Psoas muscle (tissue), 8 donors: ENCODE measurements at regions of chr3 and their contacts with region 1.

Region 1: GRCh38 chr3:194871143-194871863 is 185.6 kb downstream of the FAM43A start:
- DNase-seq: peak; percentile 64 to 85
- ATAC-seq: peak; percentile 82 to 92 (median 88)
- H3K4me3 ChIP-seq: no peak overlapping the region
- H3K27ac ChIP-seq: peak overlapping the region; percentile 31
- H3K4me1 ChIP-seq: peaks cover 23% of the 10 kb centered on the region
- H3K27me3 ChIP-seq: no peaks in the 10 kb centered on the region
- CTCF ChIP-seq: no peak

Region 2: GRCh38 chr3:194824701-194825111 is 46.6 kb before region 1 on chr3:
- intact Hi-C with region 1: loop called in 1 of 2 experiments (anchors 5 kb)
- DNase-seq: peak; percentile 43 to 82
- ATAC-seq: peak; percentile 95 to 100 (median 97)
- H3K4me3 ChIP-seq: no peak overlapping the region
- H3K27ac ChIP-seq: peak overlapping the region; percentile 31
- H3K4me1 ChIP-seq: peaks cover 16% of the 10 kb centered on the region
- H3K27me3 ChIP-seq: no peaks in the 10 kb centered on the region
- CTCF ChIP-seq: no peak

Region 3: DNA sequence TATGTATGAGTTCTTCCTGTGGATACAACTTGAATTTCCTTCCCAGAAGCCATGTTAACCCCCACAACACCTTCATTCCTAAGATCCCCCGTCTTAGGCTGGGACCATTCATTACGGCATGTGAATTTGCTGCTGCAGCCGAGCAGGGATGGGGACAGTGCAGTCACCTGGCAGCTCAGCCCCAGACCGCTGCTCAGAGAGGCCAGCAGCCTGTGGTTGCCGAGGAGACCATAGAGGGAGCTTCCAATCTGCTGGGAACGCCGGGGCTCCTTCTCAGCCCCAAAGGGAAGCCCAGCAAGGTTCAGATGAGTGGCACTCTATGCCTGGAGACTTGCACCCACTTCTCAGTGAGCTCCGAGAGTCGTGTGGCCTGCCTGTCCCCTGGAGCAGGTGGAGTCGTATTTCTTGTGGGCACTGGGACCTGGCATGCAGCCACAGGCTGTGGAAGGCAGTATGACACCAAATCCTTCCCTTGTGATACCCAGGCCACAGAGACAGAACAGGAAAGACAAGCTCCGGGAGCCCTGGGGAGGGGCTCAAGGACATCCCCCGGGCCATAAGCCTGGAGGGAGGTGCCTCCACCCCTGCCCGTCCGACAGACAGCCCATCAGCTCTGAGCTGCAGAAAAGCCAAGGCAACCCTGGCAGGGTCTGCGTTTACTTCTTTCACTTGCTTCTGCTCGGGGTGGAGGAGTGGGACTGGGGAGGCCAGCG is 18.3 kb before region 1 on chr3:
- intact Hi-C with region 1: no loop called
- DNase-seq: peak in 1 of 2 donors; percentile 85
- ATAC-seq: peak; percentile 62 to 82 (median 73)
- H3K4me3 ChIP-seq: peak overlapping the region; percentile 25
- H3K27ac ChIP-seq: peak overlapping the region; percentile 53
- H3K4me1 ChIP-seq: peaks cover 22% of the 10 kb centered on the region
- H3K27me3 ChIP-seq: no peaks in the 10 kb centered on the region
- CTCF ChIP-seq: no peak